ENCODE measurements at regions of chr3 and their contacts with region 1.

Region 1: DNA sequence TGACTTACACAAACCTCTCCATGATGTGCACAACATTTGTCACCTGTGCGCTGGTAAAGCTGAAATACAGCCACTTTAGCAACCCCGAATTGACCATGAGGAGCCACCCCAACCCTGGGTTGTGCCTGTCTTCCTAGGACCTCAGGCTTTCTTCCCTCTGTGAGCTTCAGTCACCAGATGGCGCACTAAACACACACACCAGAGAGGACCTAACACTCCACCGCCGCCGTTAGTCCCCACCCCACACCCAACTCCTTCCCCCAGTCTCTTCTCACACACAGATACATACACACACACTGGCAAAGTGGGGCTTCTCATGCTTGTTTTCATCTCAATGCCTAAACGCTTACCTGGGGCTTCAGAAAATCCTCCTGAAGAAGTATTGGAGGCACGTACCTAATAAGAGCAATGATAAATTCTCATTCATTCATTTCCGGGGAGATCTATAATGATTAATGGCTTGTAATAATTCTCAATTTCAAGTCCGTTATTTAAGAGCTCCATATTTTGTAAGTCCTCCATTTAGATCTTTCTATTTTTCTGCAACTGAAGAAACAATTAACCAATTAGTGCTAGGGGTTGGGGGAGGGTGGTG is 2.1 kb upstream of the CCDC80 start:
- DNase-seq: peak; percentile 95
- ATAC-seq: peak; percentile 99
- H3K4me3 Mint-ChIP-seq: peak overlapping the region; percentile 42
- H3K27ac Mint-ChIP-seq: peak overlapping the region; percentile 88
- H3K4me1 Mint-ChIP-seq: peaks cover 38% of the 10 kb centered on the region
- H3K27me3 Mint-ChIP-seq: no peaks in the 10 kb centered on the region

Region 2: DNA sequence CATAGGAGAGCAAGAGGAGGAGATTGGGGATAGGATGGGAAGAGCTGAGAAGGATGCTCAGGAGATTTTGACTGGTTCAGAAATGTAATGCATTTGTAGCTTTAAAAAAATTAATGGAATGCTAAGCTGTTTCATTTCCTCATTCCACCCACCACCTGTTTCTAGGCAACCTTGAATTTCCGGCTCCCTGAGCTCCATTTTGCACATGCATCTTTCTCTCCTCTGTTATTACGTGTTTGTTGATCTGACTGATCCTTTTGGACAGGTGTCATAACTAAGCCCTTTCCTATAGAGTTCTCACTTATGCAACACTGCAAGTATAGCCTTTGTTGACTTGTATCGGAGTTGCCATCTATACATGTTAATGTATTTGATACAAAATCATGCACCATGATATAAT is 604.1 kb before region 1 on chr3:
- CTCF ChIA-PET with region 1: no interaction called
- DNase-seq: no peak
- ATAC-seq: no peak
- H3K4me3 Mint-ChIP-seq: no peak overlapping the region
- H3K27ac Mint-ChIP-seq: no peak overlapping the region
- H3K4me1 Mint-ChIP-seq: no peaks in the 10 kb centered on the region
- H3K27me3 Mint-ChIP-seq: no peaks in the 10 kb centered on the region

Region 3: GRCh38 chr3:112676659-112677234 is 33.7 kb after region 1 on chr3:
- CTCF ChIA-PET with region 1: interaction called, 19 read pairs
- DNase-seq: peak; percentile 98
- ATAC-seq: peak; percentile 91
- H3K4me3 Mint-ChIP-seq: peak overlapping the region; percentile 53
- H3K27ac Mint-ChIP-seq: peak overlapping the region; percentile 98
- H3K4me1 Mint-ChIP-seq: peaks cover 70% of the 10 kb centered on the region
- H3K27me3 Mint-ChIP-seq: peaks cover 2% of the 10 kb centered on the region

Region 4: DNA sequence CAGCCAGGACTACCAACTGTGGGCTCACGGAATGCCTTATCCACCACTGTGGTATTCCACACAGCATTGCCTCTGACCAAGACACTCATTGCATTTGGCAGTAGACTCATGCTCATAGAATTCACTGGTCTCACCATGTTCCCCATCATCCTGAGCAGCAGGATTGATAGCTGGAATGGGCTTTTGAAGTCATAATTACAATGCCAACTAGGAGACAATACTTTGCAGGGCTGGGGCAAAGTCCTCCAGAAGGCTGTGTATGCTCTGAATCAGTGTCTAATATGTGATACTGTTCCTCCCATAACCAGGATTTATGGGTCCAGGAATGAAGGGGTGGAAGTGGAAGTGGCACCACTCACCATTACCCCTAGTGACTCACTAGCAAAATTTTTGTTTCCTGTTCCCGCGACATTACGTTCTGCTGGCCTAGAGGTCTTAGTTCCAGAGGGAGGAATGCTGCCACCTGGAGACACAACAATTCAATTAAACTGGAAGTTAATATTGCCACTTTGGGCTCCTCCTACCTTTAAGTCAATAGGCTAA is 56.5 kb after region 1 on chr3:
- CTCF ChIA-PET with region 1: interaction called, 15 read pairs
- DNase-seq: no peak
- ATAC-seq: no peak
- H3K4me3 Mint-ChIP-seq: no peak overlapping the region
- H3K27ac Mint-ChIP-seq: no peak overlapping the region
- H3K4me1 Mint-ChIP-seq: peaks cover 12% of the 10 kb centered on the region
- H3K27me3 Mint-ChIP-seq: peaks cover 38% of the 10 kb centered on the region

Region 5: DNA sequence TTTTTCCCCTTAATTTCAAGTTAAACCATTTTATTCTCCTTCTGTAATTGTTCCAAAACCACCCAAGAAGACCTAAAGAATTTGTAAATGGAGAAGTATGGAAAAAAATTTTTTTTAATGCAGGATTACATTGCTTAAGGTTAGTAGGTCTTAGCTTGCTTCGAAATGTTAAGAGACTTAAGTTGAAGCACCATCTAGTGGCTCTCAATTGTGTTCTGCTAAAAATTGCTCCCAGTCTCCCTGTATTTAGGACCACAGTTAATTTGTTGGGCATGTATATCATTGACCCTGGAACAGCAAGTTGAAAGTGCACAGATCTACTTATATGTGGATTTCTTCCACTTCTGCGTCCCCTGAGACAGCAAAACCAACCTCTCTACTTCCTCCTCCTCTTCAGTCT is 171.3 kb after region 1 on chr3:
- CTCF ChIA-PET with region 1: interaction called, 36 read pairs
- DNase-seq: no peak
- ATAC-seq: no peak
- H3K4me3 Mint-ChIP-seq: no peak overlapping the region
- H3K27ac Mint-ChIP-seq: no peak overlapping the region
- H3K4me1 Mint-ChIP-seq: peaks cover 27% of the 10 kb centered on the region
- H3K27me3 Mint-ChIP-seq: peaks cover 5% of the 10 kb centered on the region

Region 6: DNA sequence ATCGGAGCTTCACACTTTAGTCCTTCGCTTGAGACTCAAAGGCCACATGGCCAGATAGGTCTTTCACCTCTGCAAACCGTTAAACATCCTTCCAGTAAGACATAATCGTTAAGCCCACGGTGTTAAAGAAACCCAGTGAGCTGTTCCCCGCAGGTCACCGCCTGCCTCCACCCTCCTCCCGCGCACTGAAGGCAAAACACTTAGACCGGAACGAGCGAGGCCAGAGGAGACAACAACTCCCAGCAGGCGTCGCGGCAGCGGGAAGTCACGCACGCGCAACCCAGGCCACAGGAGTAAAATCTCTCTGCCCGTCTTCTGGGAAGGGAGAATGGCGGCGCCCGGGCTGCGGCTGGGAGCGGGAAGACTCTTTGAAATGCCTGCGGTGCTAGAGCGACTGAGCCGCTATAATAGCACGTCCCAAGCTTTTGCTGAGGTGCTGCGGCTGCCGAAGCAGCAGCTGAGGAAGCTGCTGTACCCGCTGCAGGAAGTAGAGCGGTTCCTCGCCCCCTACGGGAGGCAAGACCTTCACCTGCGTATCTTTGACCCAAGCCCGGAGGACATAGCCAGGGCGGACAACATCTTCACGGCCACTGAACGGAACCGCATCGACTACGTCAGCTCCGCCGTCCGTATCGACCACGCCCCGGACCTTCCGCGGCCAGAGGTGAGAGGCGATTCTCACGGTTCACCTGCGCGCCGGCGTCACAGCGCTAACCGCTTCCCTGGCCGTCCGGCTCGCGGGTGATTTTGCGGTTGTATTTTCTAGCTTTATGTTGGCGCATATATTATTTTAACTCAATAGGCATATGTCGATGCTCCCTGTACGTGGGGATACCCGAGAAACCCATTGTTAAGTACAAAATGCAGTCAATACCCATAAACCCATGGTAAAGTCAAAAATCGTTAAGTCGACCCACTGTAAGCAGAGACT is 347.9 kb after region 1 on chr3 and contains the start of gene GTPBP8:
- CTCF ChIA-PET with region 1: interaction called, 13 read pairs
- DNase-seq: peak; percentile 93
- ATAC-seq: peak; percentile 94
- H3K4me3 Mint-ChIP-seq: peak within 1 kb of the TSS; percentile 81
- H3K27ac Mint-ChIP-seq: peak within 1 kb of the TSS; percentile 93
- H3K4me1 Mint-ChIP-seq: peaks cover 63% of the 10 kb centered on the region
- H3K27me3 Mint-ChIP-seq: no peaks in the 10 kb centered on the region
- total RNA-seq, gene GTPBP8: 24.6 to 25.3 TPM